ENCODE measurements at regions of chr10 and their contacts with region 1.

Region 1: DNA sequence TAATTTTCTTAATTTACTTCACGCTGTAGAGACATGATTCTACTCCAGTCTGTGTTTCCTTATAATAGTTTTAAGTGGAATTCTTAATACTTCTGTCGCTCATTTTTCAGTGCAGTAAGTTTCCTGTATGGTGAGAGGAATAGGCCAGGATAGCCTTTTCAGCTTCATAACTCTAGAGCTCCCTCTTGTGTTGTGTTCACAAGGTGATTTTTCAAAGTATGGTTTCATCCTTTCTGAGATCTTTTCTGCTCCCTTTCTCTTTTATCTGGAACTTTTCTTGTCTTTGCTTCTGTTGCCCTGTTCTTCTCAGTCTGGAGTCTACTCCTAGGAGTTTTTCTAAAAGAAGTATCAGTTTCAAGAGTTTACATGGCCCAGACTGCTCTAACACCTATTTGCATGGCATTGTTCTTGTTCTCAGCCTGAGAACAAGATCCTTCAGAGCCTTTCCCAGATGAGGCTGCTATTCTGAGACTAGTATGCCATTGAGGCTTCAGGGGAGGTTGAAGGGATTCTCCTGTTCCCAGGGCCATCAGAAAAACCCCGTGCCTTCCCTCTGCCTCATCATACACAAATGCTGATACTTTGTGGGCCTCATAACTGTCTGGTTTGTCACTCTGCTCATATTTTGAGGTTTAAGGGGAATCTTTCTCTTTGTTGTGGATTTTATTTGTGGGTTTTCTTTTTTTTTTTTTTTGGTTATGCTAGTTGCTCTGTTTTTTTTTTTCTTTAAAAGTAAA is 21.8 kb downstream of the NET1 start:
- H3K4me3 ChIP-seq: no peak overlapping the region
- H3K27ac ChIP-seq: no peak overlapping the region
- H3K4me1 ChIP-seq: no peaks in the 10 kb centered on the region
- CTCF ChIP-seq: no peak; the same call in 1 of the 2 replicates

Region 2: DNA sequence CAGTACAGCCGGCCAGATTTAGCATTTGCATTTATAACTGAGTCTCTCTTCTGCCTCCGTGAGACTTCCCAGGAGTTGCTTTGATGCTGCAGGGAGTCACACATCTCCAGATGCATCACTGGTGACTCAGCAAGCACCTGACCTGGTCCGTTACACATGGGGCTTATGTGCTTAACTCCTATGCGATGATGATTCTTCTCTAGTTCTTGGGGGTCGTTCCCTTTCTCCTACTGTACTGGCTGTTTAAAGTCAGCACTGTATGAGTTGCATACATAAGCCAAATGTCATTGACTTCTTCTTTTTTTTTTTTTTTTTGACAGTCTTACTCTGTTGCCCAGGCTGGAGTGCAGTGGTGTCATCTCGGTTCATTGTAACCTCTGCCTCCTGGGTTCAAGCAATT is 621.2 kb before region 1 on chr10:
- CTCF ChIA-PET with region 1: interaction called, 31 read pairs
- POLR2A ChIA-PET with region 1: no interaction called
- H3K4me3 ChIP-seq: no peak overlapping the region
- H3K27ac ChIP-seq: no peak overlapping the region
- H3K4me1 ChIP-seq: no peaks in the 10 kb centered on the region
- CTCF ChIP-seq: no peak

Region 3: DNA sequence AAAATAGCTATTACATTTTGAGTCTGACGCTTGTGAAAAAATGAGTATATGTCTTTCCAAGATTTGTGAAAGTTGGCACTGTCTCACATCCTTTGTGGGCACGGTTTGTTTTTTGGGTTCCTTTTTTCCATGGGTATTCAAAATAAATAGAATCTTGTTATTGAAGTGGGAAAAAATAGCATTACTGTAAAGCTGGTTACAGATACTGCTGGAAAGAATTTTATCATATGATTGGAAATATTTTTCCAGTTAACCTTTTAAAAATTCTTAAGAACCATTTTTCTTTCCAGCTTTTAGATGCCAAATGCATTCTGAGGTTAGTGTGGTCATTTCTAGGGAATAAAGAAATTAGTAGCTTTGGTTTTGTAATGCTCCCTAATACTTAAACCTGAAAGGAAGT is 10.4 kb before region 1 on chr10:
- CTCF ChIA-PET with region 1: interaction called, 39 read pairs
- POLR2A ChIA-PET with region 1: no interaction called
- H3K4me3 ChIP-seq: no peak overlapping the region
- H3K27ac ChIP-seq: no peak overlapping the region
- H3K4me1 ChIP-seq: no peaks in the 10 kb centered on the region
- CTCF ChIP-seq: no peak

Region 4: GRCh38 chr10:5446390-5446926 is 12.3 kb after region 1 on chr10:
- CTCF ChIA-PET with region 1: interaction called, 31 read pairs
- POLR2A ChIA-PET with region 1: interaction called, 5 read pairs
- H3K4me3 ChIP-seq: peak overlapping the region; percentile 42
- H3K27ac ChIP-seq: peak overlapping the region; percentile 11; the same call in 1 of the 2 replicates
- H3K4me1 ChIP-seq: peaks cover 18% of the 10 kb centered on the region; the same call in 1 of the 2 replicates
- CTCF ChIP-seq: no peak

Region 5: GRCh38 chr10:5623081-5623748 is 189.0 kb after region 1 on chr10:
- CTCF ChIA-PET with region 1: interaction called, 207 read pairs
- POLR2A ChIA-PET with region 1: no interaction called
- H3K4me3 ChIP-seq: no peak overlapping the region
- H3K27ac ChIP-seq: no peak overlapping the region
- H3K4me1 ChIP-seq: no peaks in the 10 kb centered on the region
- CTCF ChIP-seq: peak; percentile 89

Region 6: GRCh38 chr10:5629303-5630111 is 195.3 kb after region 1 on chr10:
- CTCF ChIA-PET with region 1: interaction called, 207 read pairs
- POLR2A ChIA-PET with region 1: no interaction called
- H3K4me3 ChIP-seq: no peak overlapping the region
- H3K27ac ChIP-seq: no peak overlapping the region
- H3K4me1 ChIP-seq: no peaks in the 10 kb centered on the region
- CTCF ChIP-seq: no peak